ENCODE measurements at regions of chr20 and their contacts with region 1.

Region 1: GRCh38 chr20:20734475-20734948 is 22.1 kb upstream of the RALGAPA2 start:
- DNase-seq: peak; percentile 49
- ATAC-seq: peak; percentile 59
- H3K4me3 ChIP-seq: no peak overlapping the region
- H3K27ac ChIP-seq: peak overlapping the region; percentile 17; the same call in 1 of the 2 replicates
- H3K4me1 ChIP-seq: peaks cover 21% of the 10 kb centered on the region
- H3K27me3 ChIP-seq: no peaks in the 10 kb centered on the region
- CTCF ChIP-seq: no peak
- EP300 ChIP-seq: no peak
- POLR2A ChIP-seq: no peak
- RAD21 ChIP-seq: no peak

Region 2: DNA sequence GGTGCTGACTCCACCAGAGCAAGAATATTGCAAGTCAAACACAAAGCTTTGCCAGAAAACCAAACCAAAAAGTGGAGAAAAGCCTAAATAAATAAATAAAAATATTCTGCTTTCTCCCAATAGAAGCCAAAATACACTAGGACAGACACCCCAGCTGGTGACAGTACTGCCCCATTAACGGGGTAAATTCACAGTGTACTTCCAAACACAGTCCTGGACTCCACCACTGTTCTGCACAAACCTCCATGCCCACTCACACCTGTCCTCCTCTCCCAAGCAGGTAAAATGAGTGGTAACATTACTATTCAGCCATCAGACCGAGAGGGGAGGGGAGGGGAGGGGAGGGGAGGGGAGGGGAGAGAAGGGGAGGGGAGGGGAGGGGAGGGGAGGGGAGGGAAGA is 92.7 kb before region 1 on chr20:
- CTCF ChIA-PET with region 1: no interaction called
- POLR2A ChIA-PET with region 1: no interaction called
- RAD21 ChIA-PET with region 1: no interaction called
- SMC1A ChIA-PET with region 1: no interaction called
- in situ Hi-C with region 1: no loop called
- intact Hi-C with region 1: no loop called
- DNase-seq: no peak
- ATAC-seq: no peak
- H3K4me3 ChIP-seq: no peak overlapping the region
- H3K27ac ChIP-seq: no peak overlapping the region
- H3K4me1 ChIP-seq: no peaks in the 10 kb centered on the region
- H3K27me3 ChIP-seq: no peaks in the 10 kb centered on the region
- CTCF ChIP-seq: no peak
- EP300 ChIP-seq: no peak
- POLR2A ChIP-seq: no peak
- RAD21 ChIP-seq: no peak

Region 3: GRCh38 chr20:20712474-20713243 is 21.9 kb before region 1 on chr20 and contains the start of gene RALGAPA2:
- CTCF ChIA-PET with region 1: interaction called, 9 read pairs
- POLR2A ChIA-PET with region 1: interaction called, 8 read pairs
- RAD21 ChIA-PET with region 1: interaction called, 6 read pairs
- SMC1A ChIA-PET with region 1: interaction called, 11 read pairs
- in situ Hi-C with region 1: no loop called
- intact Hi-C with region 1: no loop called
- DNase-seq: peak; percentile 94
- ATAC-seq: peak; percentile 97
- H3K4me3 ChIP-seq: peak within 1 kb of the TSS; percentile 86
- H3K27ac ChIP-seq: peak within 1 kb of the TSS; percentile 66
- H3K4me1 ChIP-seq: peaks cover 6% of the 10 kb centered on the region; the same call in 1 of the 2 replicates
- H3K27me3 ChIP-seq: no peaks in the 10 kb centered on the region
- CTCF ChIP-seq: peak in 1 of 3 experiments; percentile 16; a peak in 1 of 6 replicates
- EP300 ChIP-seq: no peak
- POLR2A ChIP-seq: peak; percentile 63
- RAD21 ChIP-seq: no peak
- polyA plus RNA-seq, gene RALGAPA2: 2.9 to 4.0 TPM

Region 4: GRCh38 chr20:20926209-20926905 is 191.8 kb after region 1 on chr20:
- CTCF ChIA-PET with region 1: no interaction called
- POLR2A ChIA-PET with region 1: no interaction called
- RAD21 ChIA-PET with region 1: no interaction called
- SMC1A ChIA-PET with region 1: no interaction called
- in situ Hi-C with region 1: no loop called
- intact Hi-C with region 1: no loop called
- DNase-seq: no peak
- ATAC-seq: no peak
- H3K4me3 ChIP-seq: no peak overlapping the region
- H3K27ac ChIP-seq: no peak overlapping the region
- H3K4me1 ChIP-seq: no peaks in the 10 kb centered on the region
- H3K27me3 ChIP-seq: no peaks in the 10 kb centered on the region; a peak in 4 of 4 replicates
- CTCF ChIP-seq: no peak
- EP300 ChIP-seq: no peak
- POLR2A ChIP-seq: no peak
- RAD21 ChIP-seq: no peak